ENCODE measurements at regions of chr5 and their contacts with region 1.

Region 1: GRCh38 chr5:167699434-167699833 is 592.0 kb upstream of the WWC1 start:
- DNase-seq: peak; percentile 79 to 100
- H3K4me3 ChIP-seq: no peak overlapping the region
- H3K27ac ChIP-seq: peak overlapping the region; percentile 97
- H3K4me1 ChIP-seq: peaks cover 40% of the 10 kb centered on the region
- H3K27me3 ChIP-seq: no peaks in the 10 kb centered on the region
- CTCF ChIP-seq: no peak

Region 2: GRCh38 chr5:167294901-167295680 is 404.3 kb before region 1 on chr5:
- CTCF ChIA-PET with region 1: no interaction called
- POLR2A ChIA-PET with region 1: no interaction called
- intact Hi-C with region 1: loop called (anchors 1 kb)
- DNase-seq: peak; percentile 64 to 93
- H3K4me3 ChIP-seq: peak overlapping the region; percentile 35; the same call in 1 of the 2 replicates
- H3K27ac ChIP-seq: peak overlapping the region; percentile 98
- H3K4me1 ChIP-seq: peaks cover 37% of the 10 kb centered on the region
- H3K27me3 ChIP-seq: no peaks in the 10 kb centered on the region
- CTCF ChIP-seq: no peak

Region 3: GRCh38 chr5:167657016-167657415 is 42.4 kb before region 1 on chr5:
- CTCF ChIA-PET with region 1: no interaction called
- POLR2A ChIA-PET with region 1: no interaction called
- intact Hi-C with region 1: loop called (anchors 1 kb)
- DNase-seq: peak in 1 of 2 experiments; percentile 53
- H3K4me3 ChIP-seq: no peak overlapping the region
- H3K27ac ChIP-seq: no peak overlapping the region
- H3K4me1 ChIP-seq: peaks cover 16% of the 10 kb centered on the region
- H3K27me3 ChIP-seq: no peaks in the 10 kb centered on the region
- CTCF ChIP-seq: no peak

Region 4: DNA sequence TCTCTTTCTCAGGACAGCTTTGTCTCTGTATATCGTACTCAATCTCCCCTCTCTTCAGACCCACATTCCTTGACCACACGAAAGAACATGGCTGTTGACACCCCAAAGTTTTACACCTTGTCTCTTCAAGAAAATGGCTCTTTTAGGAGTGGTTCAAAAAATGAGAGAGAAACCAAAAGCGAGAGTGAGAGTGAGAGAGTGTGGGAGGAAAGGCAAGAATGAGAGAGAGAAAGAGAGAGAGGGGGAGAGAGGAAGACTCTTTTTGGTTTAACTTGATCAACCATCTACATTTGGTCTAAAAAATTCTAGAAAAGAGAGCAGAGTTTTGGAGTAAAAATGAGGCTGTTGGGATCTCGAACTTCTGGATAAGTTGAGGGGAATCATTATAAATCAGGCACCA is 10.2 kb after region 1 on chr5:
- CTCF ChIA-PET with region 1: no interaction called
- POLR2A ChIA-PET with region 1: interaction called, 13 read pairs
- intact Hi-C with region 1: no loop called
- DNase-seq: no peak
- H3K4me3 ChIP-seq: no peak overlapping the region
- H3K27ac ChIP-seq: no peak overlapping the region
- H3K4me1 ChIP-seq: peaks cover 16% of the 10 kb centered on the region
- H3K27me3 ChIP-seq: no peaks in the 10 kb centered on the region
- CTCF ChIP-seq: no peak

Region 5: DNA sequence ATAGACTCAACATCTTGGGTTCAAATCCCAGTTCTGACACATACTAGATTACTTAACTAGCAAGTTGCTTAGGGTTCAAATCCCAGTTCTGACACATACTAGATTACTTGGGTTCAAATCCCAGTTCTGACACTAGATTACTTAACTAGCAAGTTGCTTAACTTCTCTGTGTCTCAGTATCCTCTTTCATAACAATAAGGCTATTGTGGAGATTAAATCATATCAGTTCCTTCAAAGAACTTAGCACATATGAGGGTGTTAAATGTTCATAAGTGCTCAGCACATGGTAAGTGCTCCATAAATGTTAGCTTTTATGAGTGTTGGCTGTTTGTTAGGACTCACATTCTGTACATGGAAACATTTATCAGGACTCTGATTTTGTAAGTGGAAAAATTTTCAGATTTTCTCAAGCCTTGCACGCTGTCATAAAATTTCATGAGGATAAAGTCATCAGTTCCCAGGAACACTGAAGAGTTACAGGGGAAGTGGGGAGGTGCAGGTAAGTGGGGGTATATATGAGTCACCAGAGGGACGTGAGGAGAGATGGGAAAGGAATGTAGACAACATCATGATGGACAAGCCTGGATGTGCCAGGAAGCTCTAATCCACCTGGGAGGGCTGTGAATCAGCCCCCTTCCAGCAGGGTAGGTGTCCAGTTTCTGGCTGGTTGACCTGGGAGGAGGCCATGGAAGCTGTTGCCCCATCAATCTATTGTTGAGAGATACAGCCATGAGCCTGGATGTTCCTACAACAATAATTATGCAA is 59.8 kb after region 1 on chr5:
- CTCF ChIA-PET with region 1: no interaction called
- POLR2A ChIA-PET with region 1: no interaction called
- intact Hi-C with region 1: loop called (anchors 1 kb)
- DNase-seq: peak; percentile 70 to 92
- H3K4me3 ChIP-seq: no peak overlapping the region
- H3K27ac ChIP-seq: peak overlapping the region; percentile 84
- H3K4me1 ChIP-seq: peaks cover 20% of the 10 kb centered on the region
- H3K27me3 ChIP-seq: no peaks in the 10 kb centered on the region
- CTCF ChIP-seq: no peak

Region 6: DNA sequence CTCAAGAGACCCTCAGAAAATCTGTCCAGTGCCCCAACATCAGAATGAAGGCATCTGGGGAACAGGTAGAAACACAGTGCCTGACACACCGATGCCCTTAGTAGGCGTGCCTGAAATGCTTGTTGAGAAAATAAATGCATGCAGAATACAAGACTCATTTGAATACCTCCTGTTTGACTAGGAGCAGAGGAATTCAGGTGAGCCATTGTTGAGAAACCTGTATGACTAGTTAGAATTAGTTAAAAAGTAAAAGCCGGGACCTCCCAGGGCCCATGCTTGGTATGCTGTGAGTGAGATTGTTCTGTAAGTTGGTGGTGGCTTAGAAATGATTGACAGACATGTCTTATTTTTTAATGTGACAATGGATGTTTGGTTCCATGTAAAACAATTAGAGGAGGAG is 647.0 kb after region 1 on chr5:
- CTCF ChIA-PET with region 1: no interaction called
- POLR2A ChIA-PET with region 1: no interaction called
- intact Hi-C with region 1: no loop called
- DNase-seq: peak; percentile 68 to 96
- H3K4me3 ChIP-seq: peak overlapping the region; percentile 27; the same call in 1 of the 2 replicates
- H3K27ac ChIP-seq: peak overlapping the region; percentile 71
- H3K4me1 ChIP-seq: peaks cover 83% of the 10 kb centered on the region
- H3K27me3 ChIP-seq: no peaks in the 10 kb centered on the region
- CTCF ChIP-seq: no peak

Measured in PC-9 (cell line).